HepG2 (cell line): ENCODE measurements at regions of chr3 and their contacts with region 1.

Region 1: GRCh38 chr3:44323341-44323955 is 15.1 kb upstream of the TCAIM start:
- DNase-seq: peak; percentile 55
- ATAC-seq: no peak
- H3K4me3 ChIP-seq: no peak overlapping the region
- H3K27ac ChIP-seq: no peak overlapping the region
- H3K4me1 ChIP-seq: peaks cover 22% of the 10 kb centered on the region
- H3K27me3 ChIP-seq: no peaks in the 10 kb centered on the region; a peak in 1 of 5 replicates
- CTCF ChIP-seq: peak; percentile 83
- EP300 ChIP-seq: no peak
- POLR2A ChIP-seq: no peak
- RAD21 ChIP-seq: peak; percentile 71; the same call in 1 of the 2 replicates

Region 2: DNA sequence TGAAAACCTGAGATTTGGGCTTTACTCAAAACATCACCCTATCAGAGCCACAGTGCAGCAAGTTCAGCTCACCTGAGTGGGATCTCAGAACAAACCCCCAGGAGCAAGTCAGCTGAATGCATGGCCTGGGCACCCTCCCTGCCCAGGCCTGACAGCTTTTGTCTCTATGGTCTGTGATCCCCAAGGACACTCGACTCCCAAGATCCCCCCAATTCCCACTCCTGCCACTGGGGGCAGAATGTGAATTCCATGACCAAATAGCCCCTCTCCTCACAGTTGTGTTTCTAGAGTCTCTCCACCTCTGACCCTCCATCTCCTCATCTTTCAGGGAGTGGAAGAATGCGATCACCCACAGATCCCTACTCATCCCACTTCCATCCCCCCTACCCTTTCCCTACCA is 95.1 kb after region 1 on chr3:
- CTCF ChIA-PET with region 1: no interaction called
- POLR2A ChIA-PET with region 1: no interaction called
- in situ Hi-C with region 1: no loop called
- intact Hi-C with region 1: loop called (anchors 5 kb)
- DNase-seq: peak; percentile 26
- ATAC-seq: peak; percentile 22; the same call in 2 of the 3 replicates
- H3K4me3 ChIP-seq: no peak overlapping the region
- H3K27ac ChIP-seq: no peak overlapping the region
- H3K4me1 ChIP-seq: peaks cover 44% of the 10 kb centered on the region
- H3K27me3 ChIP-seq: peaks cover 0 to 5% of the 10 kb centered on the region in 2 experiments; a peak in 2 of 5 replicates
- CTCF ChIP-seq: peak; percentile 42
- EP300 ChIP-seq: no peak
- POLR2A ChIP-seq: no peak
- RAD21 ChIP-seq: no peak

Region 3: GRCh38 chr3:44477312-44478030 is 154.0 kb after region 1 on chr3 and contains the start of gene ZNF445:
- CTCF ChIA-PET with region 1: no interaction called
- POLR2A ChIA-PET with region 1: no interaction called
- in situ Hi-C with region 1: no loop called
- intact Hi-C with region 1: loop called (anchors 2 kb)
- DNase-seq: peak; percentile 67
- ATAC-seq: peak; percentile 85
- H3K4me3 ChIP-seq: peak within 1 kb of the TSS; percentile 81 to 92 (median 87)
- H3K27ac ChIP-seq: peak within 1 kb of the TSS; percentile 88
- H3K4me1 ChIP-seq: peaks cover 56% of the 10 kb centered on the region
- H3K27me3 ChIP-seq: no peaks in the 10 kb centered on the region; a peak in 1 of 5 replicates
- CTCF ChIP-seq: no peak; the same call in 1 of the 2 replicates
- EP300 ChIP-seq: no peak
- POLR2A ChIP-seq: peak; percentile 26 to 60; a peak in 2 of 4 replicates
- RAD21 ChIP-seq: no peak
- total RNA-seq, gene ZNF445: 10.3 and 11.8 TPM in 2 replicates